ENCODE measurements at regions of chr19 and their contacts with region 1.

Region 1: GRCh38 chr19:16041299-16041990 is 34.9 kb upstream of the TPM4 start:
- DNase-seq: peak; percentile 12
- H3K4me3 ChIP-seq: peak overlapping the region; percentile 12
- CTCF ChIP-seq: peak; percentile 93

Region 2: GRCh38 chr19:15897738-15898276 is 143.6 kb before region 1 on chr19 and contains the start of gene CYP4F2:
- CTCF ChIA-PET with region 1: no interaction called
- POLR2A ChIA-PET with region 1: no interaction called
- DNase-seq: no peak
- H3K4me3 ChIP-seq: no peak within 1 kb of the TSS
- CTCF ChIP-seq: no peak

Region 3: DNA sequence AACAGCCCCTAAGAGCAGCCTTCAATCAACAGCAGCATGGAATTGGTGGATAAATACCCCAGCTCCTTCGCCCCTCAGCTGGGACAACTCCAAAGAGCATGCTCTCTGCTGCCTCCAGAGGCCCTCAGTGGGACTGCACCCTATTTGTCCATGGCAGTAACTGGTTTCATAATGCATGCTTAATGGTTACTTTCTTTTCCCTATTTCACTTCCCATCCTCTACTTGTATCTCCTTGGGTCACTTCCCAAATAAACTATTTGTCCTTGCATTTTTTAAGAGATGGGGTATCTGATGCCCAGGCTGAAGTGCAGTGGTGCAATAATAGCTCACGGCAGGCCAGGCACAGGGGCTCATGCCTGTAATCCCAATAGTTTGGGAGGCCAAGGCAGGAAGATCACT is 21.3 kb after region 1 on chr19:
- CTCF ChIA-PET with region 1: interaction called, 45 read pairs
- POLR2A ChIA-PET with region 1: no interaction called
- DNase-seq: no peak
- H3K4me3 ChIP-seq: no peak overlapping the region
- CTCF ChIP-seq: peak; percentile 84

Region 4: DNA sequence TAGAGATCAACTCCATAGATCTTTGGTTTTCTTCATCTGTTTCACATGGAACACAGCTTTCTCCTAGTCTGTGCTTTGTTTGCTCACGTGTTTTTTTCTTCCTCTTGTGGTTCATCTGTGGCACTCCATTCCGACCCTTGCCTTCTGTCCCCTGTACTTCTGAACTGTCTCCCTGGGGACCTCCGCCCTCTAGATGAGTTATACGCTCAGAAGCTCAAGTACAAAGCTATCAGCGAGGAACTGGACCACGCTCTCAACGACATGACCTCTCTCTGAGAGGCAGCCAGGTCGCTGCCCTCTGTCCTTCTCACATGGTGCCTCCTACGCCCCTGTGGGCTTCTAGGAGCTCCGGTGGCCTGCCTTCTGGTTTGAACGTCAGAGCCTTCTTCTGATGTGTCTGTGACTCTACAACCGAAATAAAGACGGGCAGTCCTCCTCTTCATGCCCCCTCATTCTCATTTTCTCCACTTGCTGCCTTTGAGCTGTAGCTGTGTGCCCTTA is 53.7 kb after region 1 on chr19:
- CTCF ChIA-PET with region 1: interaction called, 26 read pairs
- POLR2A ChIA-PET with region 1: no interaction called
- DNase-seq: no peak
- H3K4me3 ChIP-seq: no peak overlapping the region
- CTCF ChIP-seq: no peak

Region 5: DNA sequence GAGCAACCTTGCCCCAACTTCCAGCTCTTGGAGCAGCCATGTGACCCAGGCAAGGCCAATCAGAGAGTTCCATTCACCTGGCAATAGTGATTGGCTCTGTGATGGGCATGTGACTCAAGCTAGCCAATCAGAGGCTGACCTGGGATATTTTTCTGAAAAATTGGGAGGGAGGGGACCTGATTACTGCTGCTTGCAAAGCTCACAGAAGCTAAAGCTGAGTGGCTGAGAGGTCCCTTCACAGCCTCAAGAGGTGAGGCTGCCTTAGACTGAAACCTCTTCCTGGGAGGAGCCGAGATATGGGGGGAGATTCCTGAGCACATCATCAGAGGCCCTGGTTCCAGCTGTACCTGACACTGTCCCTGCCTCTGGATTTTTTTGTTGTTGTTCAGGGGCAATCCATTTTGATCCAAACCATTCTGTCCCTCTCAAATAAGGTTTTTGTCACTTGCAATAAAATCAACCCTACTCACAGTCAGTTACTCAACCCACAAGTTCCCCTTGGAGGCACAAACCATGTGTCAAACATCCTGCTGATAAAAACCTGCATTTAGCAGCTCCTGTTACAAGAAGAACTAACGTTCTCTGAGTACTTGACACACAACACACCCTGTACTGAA is 127.1 kb after region 1 on chr19:
- CTCF ChIA-PET with region 1: interaction called, 13 read pairs
- POLR2A ChIA-PET with region 1: no interaction called
- DNase-seq: no peak
- H3K4me3 ChIP-seq: no peak overlapping the region
- CTCF ChIP-seq: no peak

Region 6: GRCh38 chr19:16247353-16248182 is 206.1 kb after region 1 on chr19:
- CTCF ChIA-PET with region 1: interaction called, 12 read pairs
- POLR2A ChIA-PET with region 1: no interaction called
- DNase-seq: peak; percentile 4
- H3K4me3 ChIP-seq: no peak overlapping the region
- CTCF ChIP-seq: peak; percentile 96